ENCODE measurements at regions of chr1 and their contacts with region 1.

Region 1: DNA sequence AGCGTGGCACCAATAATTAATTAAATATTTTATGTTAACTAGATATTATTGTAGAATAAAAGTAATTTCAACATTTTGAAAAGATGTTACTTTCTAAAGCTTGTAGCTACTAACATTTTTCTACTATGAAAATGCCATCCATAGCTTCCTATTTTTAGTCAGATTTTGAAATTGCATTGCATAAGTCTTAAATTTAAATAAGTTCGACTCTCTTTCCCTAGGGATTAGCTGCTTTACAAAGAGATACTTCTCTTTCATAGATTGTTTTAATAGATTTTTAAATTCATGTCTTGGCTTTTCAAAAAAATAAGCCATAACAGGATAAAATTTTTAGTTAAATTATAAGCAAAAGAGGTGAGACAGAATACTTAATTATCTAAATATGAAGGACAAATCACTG is 1279.6 kb downstream of the KCNT2 start:
- DNase-seq: no peak
- ATAC-seq: no peak
- H3K4me3 Mint-ChIP-seq: no peak overlapping the region
- H3K27ac Mint-ChIP-seq: no peak overlapping the region
- H3K4me1 Mint-ChIP-seq: no peaks in the 10 kb centered on the region
- H3K27me3 Mint-ChIP-seq: no peaks in the 10 kb centered on the region

Region 2: GRCh38 chr1:195096051-195096521 is 232.6 kb before region 1 on chr1:
- CTCF ChIA-PET with region 1: no interaction called
- POLR2A ChIA-PET with region 1: no interaction called
- intact Hi-C with region 1: no loop called
- DNase-seq: no peak
- ATAC-seq: no peak
- H3K4me3 Mint-ChIP-seq: no peak overlapping the region
- H3K27ac Mint-ChIP-seq: no peak overlapping the region
- H3K4me1 Mint-ChIP-seq: no peaks in the 10 kb centered on the region
- H3K27me3 Mint-ChIP-seq: no peaks in the 10 kb centered on the region

Region 3: DNA sequence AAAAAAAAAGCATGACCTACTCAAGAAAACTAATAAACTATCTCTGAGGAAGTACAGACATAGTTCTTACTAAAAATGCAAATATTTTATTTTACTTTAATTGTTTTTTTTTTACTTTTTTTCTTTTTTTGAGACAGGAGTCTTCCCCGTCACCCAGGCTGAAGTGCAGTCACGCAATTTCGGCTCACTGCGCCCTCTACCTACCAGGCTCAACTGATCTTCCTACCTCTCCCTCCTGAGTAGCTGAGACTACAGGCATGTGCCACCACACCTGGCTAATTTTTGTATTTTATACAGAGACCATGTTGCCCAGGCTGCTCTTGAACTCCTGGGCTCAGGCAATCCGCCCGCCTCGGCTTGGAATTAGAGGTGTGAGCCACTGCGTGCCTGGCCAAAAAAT is 16.5 kb after region 1 on chr1:
- CTCF ChIA-PET with region 1: interaction called, 3 read pairs
- POLR2A ChIA-PET with region 1: no interaction called
- intact Hi-C with region 1: loop called in 1 of 2 experiments (anchors 1 kb)
- DNase-seq: peak; percentile 6
- ATAC-seq: no peak
- H3K4me3 Mint-ChIP-seq: no peak overlapping the region
- H3K27ac Mint-ChIP-seq: no peak overlapping the region
- H3K4me1 Mint-ChIP-seq: no peaks in the 10 kb centered on the region
- H3K27me3 Mint-ChIP-seq: no peaks in the 10 kb centered on the region

Measured in activated CD4-positive, alpha-beta T cell treated with anti-CD3 and anti-CD28 coated beads for 36 hours (primary cell).